Sciatic nerve (tissue), 2 donors: ENCODE measurements at regions of chr10 and their contacts with region 1.

Region 1: GRCh38 chr10:95601116-95601719 is 40.0 kb upstream of the SORBS1 start:
- DNase-seq: peak; percentile 86
- ATAC-seq: peak; percentile 95

Region 2: DNA sequence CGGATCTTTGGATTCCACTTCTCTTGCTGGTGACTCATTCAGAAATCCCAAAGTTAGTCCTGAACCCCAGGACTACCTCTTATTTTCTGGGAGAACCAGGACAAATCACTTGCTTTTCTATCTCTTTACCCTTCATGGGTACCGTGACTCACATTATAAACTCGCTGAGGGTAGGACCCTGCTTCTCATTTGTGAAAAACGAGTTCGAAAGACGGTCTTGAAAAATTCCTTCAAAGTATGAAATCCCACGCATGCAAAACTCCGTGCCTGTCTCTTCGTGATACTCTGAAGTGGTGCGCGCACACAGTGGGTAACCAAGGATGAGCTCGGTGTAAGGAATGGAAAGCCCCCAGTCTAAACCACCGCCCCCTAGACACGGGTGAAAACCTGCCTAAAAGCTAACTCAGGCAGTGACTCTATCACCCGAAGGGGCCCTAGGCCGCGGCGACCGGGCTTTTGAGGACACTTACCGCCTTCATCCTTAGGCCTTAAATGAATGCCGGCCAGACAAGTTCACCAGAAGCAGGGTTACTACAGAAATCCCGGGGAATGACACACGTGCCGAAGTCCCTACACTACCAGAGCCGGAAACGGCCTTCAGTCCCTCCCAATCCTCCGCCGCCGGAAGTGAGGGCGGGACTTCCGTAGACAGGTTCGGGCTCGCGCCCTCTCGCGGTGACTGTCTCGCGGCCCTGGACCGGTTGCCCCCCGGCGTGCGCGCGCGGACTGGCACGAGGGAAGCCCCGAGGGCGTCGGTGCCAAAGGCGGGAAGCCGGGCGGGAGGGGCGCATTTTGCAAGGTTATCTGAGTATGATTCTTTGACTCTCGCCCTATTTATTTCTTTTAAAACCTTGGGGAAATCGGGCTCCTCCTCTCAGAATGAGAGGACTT is 1238.6 kb before region 1 on chr10 and contains the start of gene NOC3L:
- intact Hi-C with region 1: no loop called
- DNase-seq: peak; percentile 97
- ATAC-seq: peak; percentile 100
- total RNA-seq, gene NOC3L: 22.4 TPM

Region 3: DNA sequence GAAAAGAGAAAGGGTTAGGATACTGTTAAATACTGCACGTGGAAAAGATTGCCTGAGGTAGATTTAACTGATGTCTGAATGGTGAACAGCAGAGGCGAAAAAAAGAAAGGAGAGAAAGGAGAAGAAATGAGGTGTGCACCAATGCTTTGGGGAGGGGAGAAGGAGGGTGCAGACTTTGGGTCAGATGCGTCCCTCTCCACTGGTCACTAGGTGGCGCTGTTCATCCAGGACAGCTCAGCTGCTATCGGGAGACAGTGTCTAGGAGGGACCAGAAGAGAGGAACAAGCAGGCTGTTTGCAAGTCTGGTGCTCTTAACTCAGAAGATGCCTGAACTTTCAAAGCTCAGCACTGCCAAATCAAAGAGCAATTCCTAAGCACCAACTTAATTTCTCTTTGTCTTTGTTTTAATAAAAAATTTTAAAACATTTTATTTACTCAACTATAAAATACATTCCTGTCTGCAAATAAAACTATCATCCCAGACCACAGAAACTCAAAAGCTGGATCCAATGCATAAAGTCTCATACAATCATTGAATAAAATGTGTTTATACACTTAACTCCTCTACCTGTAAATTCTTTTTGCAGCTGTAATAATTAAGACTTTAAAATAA is 226.5 kb before region 1 on chr10:
- intact Hi-C with region 1: loop called (anchors 10 kb)
- DNase-seq: peak; percentile 87
- ATAC-seq: peak; percentile 86

Region 4: DNA sequence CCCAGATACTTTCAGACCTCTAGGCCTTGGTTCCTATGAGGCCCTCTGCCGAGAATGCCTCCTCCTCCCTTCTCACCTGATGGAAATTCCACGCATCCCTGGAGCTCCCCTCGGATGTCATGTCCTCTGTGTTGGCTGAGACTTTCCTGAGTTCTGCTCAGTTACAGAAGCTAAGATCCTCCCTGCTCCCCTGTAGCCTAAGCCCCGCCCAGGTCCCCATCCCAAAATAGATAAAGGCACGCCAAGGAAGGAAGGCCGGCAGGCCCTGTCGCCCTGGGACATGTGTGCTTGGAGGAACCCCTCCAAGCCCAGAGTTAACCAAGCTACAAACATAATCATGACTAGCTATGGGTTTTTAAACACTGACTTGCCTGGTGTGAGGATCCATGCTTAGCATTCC is 163.5 kb before region 1 on chr10:
- intact Hi-C with region 1: loop called (anchors 5 kb)
- DNase-seq: no peak
- ATAC-seq: no peak